ENCODE measurements at regions of chr19 and their contacts with region 1.

Region 1: GRCh38 chr19:2427429-2428320 is at the start of gene TIMM13:
- DNase-seq: peak; percentile 95

Region 2: GRCh38 chr19:2355168-2356035 is 72.3 kb before region 1 on chr19:
- CTCF ChIA-PET with region 1: no interaction called
- POLR2A ChIA-PET with region 1: no interaction called
- DNase-seq: no peak

Region 3: DNA sequence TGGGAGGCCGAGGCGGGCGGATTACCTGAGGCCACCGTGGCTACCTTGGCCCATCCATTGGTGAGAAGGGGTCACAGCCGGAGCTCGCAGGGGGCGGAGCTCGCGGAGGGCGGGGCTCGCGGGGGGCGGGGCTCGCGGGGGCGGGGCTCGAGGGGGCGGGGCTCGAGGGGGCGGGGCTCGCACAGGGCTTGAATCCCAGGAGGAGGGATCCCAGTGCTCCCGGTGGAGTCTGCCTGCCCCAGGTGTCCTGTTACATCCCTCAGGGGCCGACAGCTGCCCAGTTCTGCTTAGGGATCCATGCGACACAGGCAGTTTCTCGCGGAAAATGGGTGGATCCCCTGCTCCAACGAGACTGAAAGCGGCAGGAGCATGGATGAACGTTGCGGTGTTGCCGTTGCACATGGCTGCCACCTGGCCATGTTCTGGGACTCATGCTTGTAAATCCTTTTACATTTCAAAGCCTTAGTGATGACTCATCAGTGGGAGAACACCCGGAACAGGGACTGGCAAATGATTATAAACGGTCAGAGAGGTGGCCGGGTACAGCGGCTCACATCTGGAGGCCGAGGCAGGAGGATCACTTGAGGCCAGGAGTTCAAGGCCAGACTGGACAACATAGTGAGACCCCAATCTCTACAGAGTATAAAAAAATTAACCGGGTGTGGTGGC is 42.5 kb before region 1 on chr19:
- CTCF ChIA-PET with region 1: no interaction called
- POLR2A ChIA-PET with region 1: no interaction called
- DNase-seq: peak; percentile 93

Region 4: DNA sequence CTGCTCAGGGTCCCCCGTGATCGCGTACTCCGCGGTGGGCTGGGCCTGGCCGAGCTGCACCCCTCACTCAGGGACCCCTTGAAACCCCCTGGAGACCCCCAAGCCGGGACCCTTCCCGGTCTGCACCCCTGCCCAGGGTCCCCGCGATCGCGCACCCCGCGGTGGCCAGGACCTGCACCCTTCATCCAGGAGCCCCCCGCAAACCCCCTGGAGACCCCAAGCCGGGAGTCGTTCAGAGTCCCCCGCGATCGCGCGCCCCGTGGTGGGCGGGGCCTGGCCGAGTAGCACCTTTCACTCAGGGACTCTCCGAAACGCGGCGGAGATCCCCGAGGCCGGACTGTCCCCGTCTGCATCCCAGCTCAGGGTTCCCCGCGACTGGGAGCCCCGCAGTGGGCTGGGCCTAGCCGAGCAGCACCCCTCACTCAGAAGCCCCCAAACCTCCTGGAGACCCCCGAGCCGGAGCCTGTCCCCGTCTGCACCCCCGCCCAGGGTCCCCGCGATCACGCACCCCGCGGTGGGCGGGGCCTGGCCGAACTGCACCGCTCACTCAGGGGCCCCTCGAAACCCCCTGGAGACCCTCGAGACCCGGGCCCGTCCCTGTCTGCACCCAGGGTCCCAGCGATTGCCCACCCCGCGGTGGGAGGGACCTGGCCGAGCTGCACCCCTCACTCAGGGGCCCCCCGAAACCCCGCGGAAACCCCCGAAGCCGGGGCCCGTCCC is 28.3 kb after region 1 on chr19:
- CTCF ChIA-PET with region 1: no interaction called
- POLR2A ChIA-PET with region 1: interaction called, 22 read pairs
- DNase-seq: peak; percentile 48

Region 5: GRCh38 chr19:2610637-2611482 is 183.2 kb after region 1 on chr19:
- CTCF ChIA-PET with region 1: interaction called, 12 read pairs
- POLR2A ChIA-PET with region 1: interaction called, 3 read pairs
- DNase-seq: peak; percentile 81

Measured in HEK293T (cell line).